CD8-positive, alpha-beta T cell (primary cell): ENCODE measurements at regions of chr18 and their contacts with region 1.

Region 1: GRCh38 chr18:25298853-25299274 is 53.1 kb downstream of the ZNF521 start:
- DNase-seq: peak in 1 of 9 experiments; percentile 1
- ATAC-seq: no peak
- H3K4me3 ChIP-seq: no peak overlapping the region
- H3K4me3 Mint-ChIP-seq: no peak overlapping the region
- H3K27ac ChIP-seq: no peak overlapping the region
- H3K27ac Mint-ChIP-seq: no peak overlapping the region
- H3K4me1 ChIP-seq: no peaks in the 10 kb centered on the region
- H3K4me1 Mint-ChIP-seq: no peaks in the 10 kb centered on the region
- H3K27me3 ChIP-seq: no peaks in the 10 kb centered on the region
- H3K27me3 Mint-ChIP-seq: no peaks in the 10 kb centered on the region
- CTCF ChIP-seq: no peak

Region 2: DNA sequence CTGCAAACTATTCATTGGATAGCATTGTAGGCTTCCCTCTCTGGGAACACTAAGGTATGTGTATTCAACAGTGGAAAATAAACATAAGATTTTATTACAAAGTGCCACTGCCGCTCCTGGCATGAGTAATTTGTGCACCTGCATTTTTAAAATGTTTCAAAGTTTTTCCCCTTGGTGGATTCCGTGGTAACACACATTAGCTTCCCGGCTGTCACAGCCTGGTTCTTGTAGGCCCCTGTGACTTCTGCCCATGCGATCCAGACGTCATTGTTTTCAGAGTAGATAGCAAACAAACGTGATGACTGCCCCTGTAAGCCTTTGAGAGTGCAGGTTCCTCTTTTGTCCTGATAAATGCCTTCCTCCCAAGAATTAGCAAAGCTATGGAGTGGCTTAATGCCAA is 367.9 kb before region 1 on chr18:
- CTCF ChIA-PET with region 1: no interaction called
- POLR2A ChIA-PET with region 1: no interaction called
- intact Hi-C with region 1: no loop called
- DNase-seq: no peak
- ATAC-seq: no peak
- H3K4me3 ChIP-seq: no peak overlapping the region
- H3K4me3 Mint-ChIP-seq: no peak overlapping the region
- H3K27ac ChIP-seq: no peak overlapping the region
- H3K27ac Mint-ChIP-seq: no peak overlapping the region
- H3K4me1 ChIP-seq: no peaks in the 10 kb centered on the region
- H3K4me1 Mint-ChIP-seq: no peaks in the 10 kb centered on the region
- H3K27me3 ChIP-seq: no peaks in the 10 kb centered on the region
- H3K27me3 Mint-ChIP-seq: no peaks in the 10 kb centered on the region
- CTCF ChIP-seq: no peak

Region 3: GRCh38 chr18:25351777-25352628 is 53.1 kb after region 1 on chr18 and contains the start of gene ZNF521:
- CTCF ChIA-PET with region 1: no interaction called
- POLR2A ChIA-PET with region 1: no interaction called
- intact Hi-C with region 1: no loop called
- DNase-seq: peak in 7 of 9 experiments; percentile 17 to 68 (median 44)
- ATAC-seq: peak; percentile 87
- H3K4me3 ChIP-seq: peak within 1 kb of the TSS; percentile 52 to 54
- H3K4me3 Mint-ChIP-seq: peak within 1 kb of the TSS; percentile 80
- H3K27ac ChIP-seq: no peak within 1 kb of the TSS
- H3K27ac Mint-ChIP-seq: no peak within 1 kb of the TSS
- H3K4me1 ChIP-seq: peaks cover 6% of the 10 kb centered on the region
- H3K4me1 Mint-ChIP-seq: peaks cover 22% of the 10 kb centered on the region
- H3K27me3 ChIP-seq: peaks cover 11 to 14% of the 10 kb centered on the region in 2 experiments
- H3K27me3 Mint-ChIP-seq: peaks cover 44% of the 10 kb centered on the region
- CTCF ChIP-seq: no peak
- total RNA-seq, gene ZNF521: not detected

Region 4: DNA sequence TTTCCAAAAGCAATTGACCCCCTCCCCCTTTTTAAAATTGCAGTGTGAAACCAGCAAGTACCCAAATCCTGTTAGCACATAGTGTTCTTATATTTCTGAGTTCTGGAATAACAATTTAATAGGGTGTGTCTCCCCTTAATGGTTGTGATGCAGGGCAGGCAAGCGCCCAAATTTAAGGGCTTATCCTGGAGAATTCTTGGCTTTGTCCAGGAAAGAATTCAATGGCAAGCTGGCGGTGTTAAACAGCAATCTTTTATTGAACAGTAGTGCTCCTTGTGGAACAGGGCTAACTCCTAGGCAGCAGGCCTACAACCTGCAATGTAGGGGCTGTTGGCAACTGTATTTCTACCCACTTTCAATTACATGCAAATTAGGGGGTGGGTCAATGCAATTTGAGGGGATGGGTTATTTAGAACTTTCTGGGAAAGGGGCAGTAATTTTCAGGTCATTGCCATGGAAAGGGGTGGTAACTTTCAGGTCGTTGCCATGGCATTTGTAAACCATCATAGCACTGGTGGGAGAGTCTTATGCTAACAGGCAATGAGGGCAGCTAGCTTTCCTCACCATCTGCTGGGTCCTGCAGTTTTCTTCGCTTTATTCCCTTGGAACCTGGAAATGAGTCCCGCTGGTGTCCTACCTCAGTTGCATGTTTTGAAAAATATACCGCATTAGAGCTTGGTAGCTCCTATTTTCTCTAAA is 1398.5 kb after region 1 on chr18:
- CTCF ChIA-PET with region 1: no interaction called
- POLR2A ChIA-PET with region 1: no interaction called
- intact Hi-C with region 1: loop called in 1 of 2 experiments (anchors 5 kb)
- DNase-seq: no peak
- ATAC-seq: no peak
- H3K4me3 ChIP-seq: no peak overlapping the region
- H3K4me3 Mint-ChIP-seq: no peak overlapping the region
- H3K27ac ChIP-seq: no peak overlapping the region
- H3K27ac Mint-ChIP-seq: no peak overlapping the region
- H3K4me1 ChIP-seq: no peaks in the 10 kb centered on the region
- H3K4me1 Mint-ChIP-seq: no peaks in the 10 kb centered on the region
- H3K27me3 ChIP-seq: no peaks in the 10 kb centered on the region
- H3K27me3 Mint-ChIP-seq: peaks cover 2% of the 10 kb centered on the region
- CTCF ChIP-seq: no peak